Right ventricle myocardium inferior (tissue), 1 donor: ENCODE measurements at regions of chr6 and their contacts with region 1.

Region 1: GRCh38 chr6:112237595-112237994 is 16.8 kb downstream of the LAMA4 start:
- DNase-seq: no peak
- ATAC-seq: peak; percentile 75

Region 2: DNA sequence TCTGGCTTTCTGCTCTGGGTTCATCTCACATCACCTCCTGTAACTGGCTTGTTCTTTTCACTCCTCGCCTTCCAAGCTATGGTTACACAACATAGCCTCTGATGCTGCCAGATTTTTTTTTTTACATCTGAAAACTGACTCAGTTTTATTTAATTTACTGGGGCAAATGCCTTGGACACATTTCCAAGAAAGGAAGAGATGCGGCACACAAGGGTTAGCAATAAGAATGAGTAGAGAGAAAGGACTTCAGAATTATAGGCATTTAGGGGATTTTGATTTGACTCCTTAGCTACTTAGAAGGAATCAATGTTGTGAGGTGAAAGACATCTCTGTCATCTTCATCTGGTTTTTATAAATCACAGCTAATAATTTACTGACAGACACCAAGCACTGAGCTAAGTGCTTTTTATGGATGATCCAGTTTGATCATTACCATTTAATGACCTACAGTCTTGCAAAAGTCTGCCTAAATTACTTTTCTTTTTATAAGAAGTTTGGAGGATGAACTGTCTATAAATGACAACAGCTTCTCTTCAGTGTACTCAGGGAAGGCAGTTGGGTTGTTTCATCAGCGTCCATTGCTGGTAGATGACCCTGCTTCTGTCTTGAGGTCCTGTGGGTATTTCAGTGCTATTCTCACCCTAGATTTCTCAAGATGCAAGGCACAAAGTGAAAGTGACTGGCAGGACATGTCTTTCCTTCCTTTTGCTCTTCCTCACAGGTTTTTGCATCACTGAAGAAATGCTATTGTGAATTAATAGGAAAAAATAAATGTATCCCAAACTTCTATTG is 14.3 kb before region 1 on chr6:
- intact Hi-C with region 1: loop called (anchors 2 kb)
- DNase-seq: no peak
- ATAC-seq: peak; percentile 72